H1 (cell line): ENCODE measurements at regions of chr2 and their contacts with region 1.

Region 1: DNA sequence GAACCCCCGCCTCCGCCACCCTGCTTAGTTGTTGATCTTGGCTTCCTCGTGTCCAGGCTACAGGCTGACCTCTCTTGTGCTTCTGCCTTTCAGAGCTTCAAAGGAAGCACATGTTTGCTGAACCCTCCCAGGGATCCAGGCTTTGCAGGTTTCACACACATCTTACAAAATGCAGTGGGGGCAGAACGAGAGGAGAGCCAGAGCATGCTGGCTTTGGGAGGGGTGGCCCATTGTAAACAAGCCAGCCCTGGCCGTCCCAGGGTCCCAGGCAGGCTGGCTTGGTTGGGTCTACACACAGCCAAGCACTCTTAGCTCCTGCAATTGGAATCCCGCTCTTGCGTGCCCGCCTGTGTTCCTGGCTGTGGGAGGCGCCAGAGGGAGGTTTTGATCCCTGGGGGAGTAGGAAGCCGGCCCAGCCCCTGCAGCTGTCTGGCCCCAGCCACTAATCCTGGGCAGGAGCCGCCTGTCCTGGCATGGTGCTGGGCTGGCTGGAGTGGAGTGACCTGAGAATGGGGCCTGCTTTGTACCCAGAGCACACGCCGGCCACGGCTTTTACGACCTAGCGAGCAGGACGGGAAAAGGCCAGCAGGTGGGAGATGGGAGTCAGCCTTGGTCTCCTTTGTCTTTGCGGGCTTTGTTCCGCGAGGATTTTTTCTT is 53.9 kb downstream of the SH3BP4 start:
- DNase-seq: peak; percentile 49 to 77
- H3K4me3 ChIP-seq: no peak overlapping the region; a peak in 1 of 8 replicates
- H3K27ac ChIP-seq: peak overlapping the region; percentile 43; the same call in 1 of the 2 replicates
- H3K4me1 ChIP-seq: peaks cover 4 to 31% (median 19%) of the 10 kb centered on the region in 4 experiments
- H3K27me3 ChIP-seq: no peaks in the 10 kb centered on the region
- CTCF ChIP-seq: peak; percentile 26 to 50 (median 38); a peak in 3 of 4 replicates
- EP300 ChIP-seq: no peak
- POLR2A ChIP-seq: no peak
- RAD21 ChIP-seq: peak; percentile 33 to 46

Region 2: GRCh38 chr2:235026649-235027557 is 21.2 kb after region 1 on chr2:
- CTCF ChIA-PET with region 1: interaction called, 11 read pairs
- POLR2A ChIA-PET with region 1: no interaction called
- DNase-seq: no peak
- H3K4me3 ChIP-seq: no peak overlapping the region
- H3K27ac ChIP-seq: no peak overlapping the region
- H3K4me1 ChIP-seq: peaks cover 0 to 8% (median 7%) of the 10 kb centered on the region in 4 experiments; a peak in 4 of 7 replicates
- H3K27me3 ChIP-seq: no peaks in the 10 kb centered on the region
- CTCF ChIP-seq: no peak
- EP300 ChIP-seq: no peak
- POLR2A ChIP-seq: no peak
- RAD21 ChIP-seq: no peak

Region 3: GRCh38 chr2:235050992-235051351 is 45.2 kb after region 1 on chr2:
- CTCF ChIA-PET with region 1: interaction called, 23 read pairs
- POLR2A ChIA-PET with region 1: no interaction called
- DNase-seq: no peak
- H3K4me3 ChIP-seq: no peak overlapping the region
- H3K27ac ChIP-seq: no peak overlapping the region
- H3K4me1 ChIP-seq: no peaks in the 10 kb centered on the region; a peak in 1 of 7 replicates
- H3K27me3 ChIP-seq: no peaks in the 10 kb centered on the region; a peak in 1 of 7 replicates
- CTCF ChIP-seq: no peak
- EP300 ChIP-seq: no peak
- POLR2A ChIP-seq: no peak
- RAD21 ChIP-seq: peak in 1 of 2 experiments; percentile 21; a peak in 1 of 4 replicates

Region 4: DNA sequence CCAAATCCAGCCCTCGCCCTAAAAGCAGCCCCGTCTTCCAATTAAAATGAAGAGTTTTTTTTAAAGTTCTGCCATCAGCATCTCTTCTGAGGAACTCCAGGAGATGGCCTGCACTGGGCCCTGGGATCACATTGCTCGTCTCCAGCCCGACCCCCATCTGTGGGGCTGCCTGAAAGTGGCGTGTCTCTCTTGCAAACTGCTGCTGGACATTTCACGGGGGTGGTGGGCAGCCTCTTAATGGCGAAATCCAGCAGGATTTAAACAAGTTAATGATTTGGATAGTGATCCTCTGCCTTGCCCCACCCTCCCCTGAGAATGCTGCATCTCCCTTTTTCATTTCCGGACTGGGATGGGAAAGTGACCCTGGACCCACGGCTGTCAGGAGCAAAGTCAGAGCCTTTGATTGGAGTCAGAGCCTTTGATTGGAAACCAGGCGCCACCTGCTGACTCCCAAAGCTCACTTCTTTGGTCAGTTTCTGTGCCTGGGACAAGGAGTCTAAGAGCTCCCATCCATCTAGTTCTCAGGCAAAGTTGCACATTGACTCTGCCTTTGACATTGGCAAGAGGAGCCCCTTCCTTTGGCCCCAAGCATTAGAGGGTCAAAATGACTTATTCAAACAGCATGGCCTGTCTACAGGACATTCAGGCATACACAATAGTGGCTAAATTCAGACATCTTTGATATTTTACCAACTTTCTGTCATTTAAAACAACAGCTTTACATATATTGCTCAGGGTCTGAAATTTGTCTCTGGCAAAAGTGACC is 101.3 kb after region 1 on chr2:
- CTCF ChIA-PET with region 1: interaction called, 35 read pairs
- POLR2A ChIA-PET with region 1: no interaction called
- DNase-seq: peak; percentile 31 to 69
- H3K4me3 ChIP-seq: no peak overlapping the region
- H3K27ac ChIP-seq: no peak overlapping the region
- H3K4me1 ChIP-seq: peaks cover 0 to 3% (median 0%) of the 10 kb centered on the region in 4 experiments; a peak in 1 of 7 replicates
- H3K27me3 ChIP-seq: no peaks in the 10 kb centered on the region
- CTCF ChIP-seq: peak; percentile 33 to 80 (median 80)
- EP300 ChIP-seq: no peak
- POLR2A ChIP-seq: no peak
- RAD21 ChIP-seq: peak; percentile 92 to 95